ENCODE measurements at regions of chr7 and their contacts with region 1.

Region 1: GRCh38 chr7:38107486-38107893 is 70.6 kb upstream of the STARD3NL start:
- DNase-seq: peak; percentile 35 to 59 (median 42)
- ATAC-seq: peak; percentile 45 to 83
- H3K4me3 ChIP-seq: no peak overlapping the region
- H3K27ac ChIP-seq: no peak overlapping the region
- H3K4me1 ChIP-seq: no peaks in the 10 kb centered on the region
- H3K27me3 ChIP-seq: no peaks in the 10 kb centered on the region

Region 2: GRCh38 chr7:37901236-37901827 is 206.2 kb before region 1 on chr7:
- intact Hi-C with region 1: loop called in 2 of 4 experiments (anchors 5 to 10 kb)
- DNase-seq: no peak
- ATAC-seq: peak; percentile 47 to 55
- H3K4me3 ChIP-seq: no peak overlapping the region
- H3K27ac ChIP-seq: no peak overlapping the region
- H3K4me1 ChIP-seq: no peaks in the 10 kb centered on the region
- H3K27me3 ChIP-seq: no peaks in the 10 kb centered on the region

Region 3: DNA sequence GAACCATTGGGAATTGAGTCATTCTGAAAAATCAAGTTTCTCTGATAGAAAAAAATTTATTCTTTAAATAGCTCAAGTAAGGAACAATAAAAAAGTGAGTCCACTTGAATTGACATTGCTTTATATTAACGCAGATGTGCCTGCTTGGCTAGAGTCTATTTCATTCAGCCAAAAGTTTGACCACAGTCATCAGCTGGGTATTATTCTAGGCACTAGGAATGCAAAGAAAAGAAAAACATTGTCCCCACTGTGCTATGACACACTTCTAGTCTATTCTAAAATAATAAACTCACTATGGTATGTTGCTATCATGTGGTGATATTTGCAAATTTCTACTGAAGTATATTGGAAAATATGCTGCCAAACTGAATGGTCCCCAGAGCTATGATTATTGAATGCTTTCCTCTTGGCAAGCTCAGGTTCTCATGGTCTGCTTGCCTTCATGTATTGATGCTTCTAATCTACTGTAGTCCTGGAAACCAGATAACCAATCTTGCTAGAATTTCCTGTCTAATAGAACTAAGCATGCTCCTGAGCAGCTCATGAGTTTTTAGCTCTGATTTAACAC is 199.2 kb before region 1 on chr7:
- intact Hi-C with region 1: loop called in 2 of 4 experiments (anchors 5 to 10 kb)
- DNase-seq: no peak
- ATAC-seq: peak; percentile 86 to 87
- H3K4me3 ChIP-seq: no peak overlapping the region
- H3K27ac ChIP-seq: no peak overlapping the region
- H3K4me1 ChIP-seq: no peaks in the 10 kb centered on the region
- H3K27me3 ChIP-seq: no peaks in the 10 kb centered on the region

Region 4: DNA sequence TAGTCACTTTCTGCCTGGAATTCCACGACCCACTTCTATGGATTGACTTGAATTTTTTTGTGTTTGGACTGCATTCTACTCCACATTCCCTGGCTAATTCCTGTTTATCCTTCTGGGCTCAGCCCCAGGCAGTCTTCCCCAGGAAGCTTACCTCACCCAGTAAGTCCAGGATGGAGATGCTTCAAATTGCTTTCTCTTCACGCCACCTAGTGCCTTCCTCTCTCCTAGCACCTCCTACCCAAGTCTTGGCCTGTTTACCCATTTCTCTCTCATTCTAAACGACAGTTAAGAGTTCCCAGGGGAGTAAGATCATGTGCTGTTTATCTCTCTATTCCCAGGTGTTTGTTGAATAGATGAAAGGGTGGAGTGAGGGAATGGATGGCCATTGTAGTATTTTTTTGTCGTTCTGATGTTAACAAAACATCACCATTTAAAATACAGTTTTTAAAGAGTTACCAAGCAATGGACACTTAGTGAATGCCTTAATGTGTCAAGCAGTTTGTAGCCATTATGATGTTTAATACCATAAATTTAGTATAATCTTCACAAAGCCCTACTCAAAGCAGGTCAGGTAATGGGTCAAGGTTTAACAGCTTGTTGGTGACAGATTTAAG is 211.4 kb after region 1 on chr7:
- intact Hi-C with region 1: loop called (anchors 5 to 10 kb)
- DNase-seq: no peak
- ATAC-seq: peak; percentile 74 to 90
- H3K4me3 ChIP-seq: no peak overlapping the region
- H3K27ac ChIP-seq: no peak overlapping the region
- H3K4me1 ChIP-seq: no peaks in the 10 kb centered on the region
- H3K27me3 ChIP-seq: no peaks in the 10 kb centered on the region

Measured in right cardiac atrium (tissue), 5 donors.